ENCODE measurements at regions of chr12 and their contacts with region 1.

Region 1: GRCh38 chr12:121550974-121551634 is 29.7 kb downstream of the KDM2B start:
- DNase-seq: no peak
- H3K4me3 ChIP-seq: no peak overlapping the region
- H3K27ac ChIP-seq: no peak overlapping the region
- H3K4me1 ChIP-seq: no peaks in the 10 kb centered on the region
- H3K27me3 ChIP-seq: no peaks in the 10 kb centered on the region
- CTCF ChIP-seq: no peak
- EP300 ChIP-seq: no peak
- RAD21 ChIP-seq: no peak

Region 2: DNA sequence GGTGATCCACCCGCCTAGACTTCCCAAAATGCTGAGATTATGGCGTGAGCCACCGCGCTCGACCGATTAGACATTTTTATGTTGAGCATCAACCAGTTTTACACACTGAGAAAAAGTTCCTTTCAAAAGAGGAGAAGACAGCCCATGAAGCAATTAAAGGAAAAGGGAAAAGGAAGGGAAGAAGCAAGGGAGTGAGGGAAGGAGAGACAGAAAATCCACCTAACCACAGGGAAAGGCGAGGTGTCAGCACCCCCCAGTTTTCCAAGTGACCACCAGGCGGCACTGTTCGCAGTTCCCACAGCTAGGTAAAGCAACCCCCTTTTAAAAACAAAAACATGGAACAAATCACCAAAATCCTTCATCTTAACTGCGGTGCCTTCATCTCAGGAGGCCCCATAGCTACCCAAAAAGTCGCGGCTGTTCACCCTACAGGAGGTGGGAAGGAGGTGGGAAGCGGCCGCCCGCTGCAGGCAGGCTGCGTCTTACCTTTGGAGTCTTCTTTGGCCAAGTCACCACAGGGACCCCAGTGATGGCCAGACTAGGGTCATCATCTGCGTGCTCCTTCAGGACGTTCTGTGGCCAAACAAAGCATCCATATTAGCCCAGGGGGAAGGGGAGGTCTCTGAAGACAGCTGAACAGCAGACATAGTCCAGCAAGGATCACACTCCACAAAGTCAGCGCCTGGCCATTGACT is 56.9 kb before region 1 on chr12:
- CTCF ChIA-PET with region 1: interaction called, 21 read pairs
- POLR2A ChIA-PET with region 1: interaction called, 3 read pairs
- DNase-seq: peak; percentile 73
- H3K4me3 ChIP-seq: no peak overlapping the region
- H3K27ac ChIP-seq: no peak overlapping the region
- H3K4me1 ChIP-seq: no peaks in the 10 kb centered on the region
- H3K27me3 ChIP-seq: no peaks in the 10 kb centered on the region
- CTCF ChIP-seq: peak; percentile 86
- EP300 ChIP-seq: no peak
- RAD21 ChIP-seq: peak; percentile 51

Region 3: GRCh38 chr12:121536899-121537813 is 13.9 kb before region 1 on chr12:
- CTCF ChIA-PET with region 1: interaction called, 18 read pairs
- POLR2A ChIA-PET with region 1: no interaction called
- DNase-seq: peak; percentile 88
- H3K4me3 ChIP-seq: peak overlapping the region; percentile 50 to 54
- H3K27ac ChIP-seq: peak overlapping the region in 1 of 2 experiments; percentile 35; a peak in 2 of 4 replicates
- H3K4me1 ChIP-seq: peaks cover 4 to 16% of the 10 kb centered on the region in 2 experiments; a peak in 2 of 4 replicates
- H3K27me3 ChIP-seq: no peaks in the 10 kb centered on the region
- CTCF ChIP-seq: no peak
- EP300 ChIP-seq: no peak
- RAD21 ChIP-seq: no peak

Region 4: DNA sequence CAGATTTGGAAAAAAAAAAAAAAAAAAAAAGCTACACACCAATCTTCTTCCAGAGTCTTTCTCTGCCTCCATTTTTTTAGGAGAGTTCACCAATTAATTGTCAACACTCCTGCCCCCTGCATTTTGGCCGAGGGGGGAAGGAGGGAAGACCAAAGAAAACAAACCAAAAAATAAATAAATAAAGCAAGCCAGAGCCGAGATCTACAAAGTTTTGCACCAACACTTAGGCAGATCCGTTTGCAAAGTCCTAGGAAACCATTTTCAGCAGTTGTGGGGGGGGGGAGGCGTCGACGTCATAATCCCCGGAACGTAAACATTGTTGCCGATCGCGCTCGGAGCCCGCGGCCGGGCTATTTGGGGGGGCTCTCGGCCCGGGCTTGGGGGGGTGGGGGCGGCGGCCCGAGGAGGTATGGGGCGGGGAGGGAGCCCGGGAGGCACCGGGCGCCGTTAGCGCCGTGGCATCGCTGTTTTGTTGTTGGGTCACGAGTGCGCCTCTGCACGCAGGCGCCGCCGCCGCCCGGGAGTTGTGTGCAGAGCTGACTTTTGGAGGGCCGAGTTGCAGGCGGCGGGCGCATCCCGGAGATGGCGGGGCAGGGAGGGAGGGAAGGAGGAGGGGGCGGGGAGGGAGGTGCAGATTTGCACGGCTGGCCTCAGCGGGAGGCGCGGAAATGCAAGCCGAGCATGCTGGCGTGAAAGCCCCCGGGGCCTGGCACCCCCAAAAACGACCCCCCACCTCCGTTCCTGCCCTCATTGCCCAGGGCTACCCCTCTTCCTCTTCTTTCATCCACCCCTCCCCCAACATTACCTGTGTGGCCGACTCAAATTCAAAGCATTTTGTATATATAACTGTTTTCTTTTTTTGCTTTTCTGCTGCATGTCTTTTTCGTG is 29.1 kb after region 1 on chr12:
- CTCF ChIA-PET with region 1: interaction called, 30 read pairs
- POLR2A ChIA-PET with region 1: no interaction called
- DNase-seq: peak; percentile 84
- H3K4me3 ChIP-seq: peak overlapping the region; percentile 64 to 87
- H3K27ac ChIP-seq: peak overlapping the region; percentile 90 to 98
- H3K4me1 ChIP-seq: peaks cover 25 to 32% of the 10 kb centered on the region in 2 experiments; a peak in 3 of 4 replicates
- H3K27me3 ChIP-seq: no peaks in the 10 kb centered on the region
- CTCF ChIP-seq: no peak
- EP300 ChIP-seq: no peak
- RAD21 ChIP-seq: no peak

Region 5: GRCh38 chr12:121620328-121620891 is 69.3 kb after region 1 on chr12:
- CTCF ChIA-PET with region 1: interaction called, 86 read pairs
- POLR2A ChIA-PET with region 1: no interaction called
- DNase-seq: no peak
- H3K4me3 ChIP-seq: no peak overlapping the region
- H3K27ac ChIP-seq: no peak overlapping the region
- H3K4me1 ChIP-seq: peaks cover 0 to 3% of the 10 kb centered on the region in 2 experiments; a peak in 1 of 4 replicates
- H3K27me3 ChIP-seq: no peaks in the 10 kb centered on the region
- CTCF ChIP-seq: no peak
- EP300 ChIP-seq: no peak
- RAD21 ChIP-seq: no peak

Region 6: DNA sequence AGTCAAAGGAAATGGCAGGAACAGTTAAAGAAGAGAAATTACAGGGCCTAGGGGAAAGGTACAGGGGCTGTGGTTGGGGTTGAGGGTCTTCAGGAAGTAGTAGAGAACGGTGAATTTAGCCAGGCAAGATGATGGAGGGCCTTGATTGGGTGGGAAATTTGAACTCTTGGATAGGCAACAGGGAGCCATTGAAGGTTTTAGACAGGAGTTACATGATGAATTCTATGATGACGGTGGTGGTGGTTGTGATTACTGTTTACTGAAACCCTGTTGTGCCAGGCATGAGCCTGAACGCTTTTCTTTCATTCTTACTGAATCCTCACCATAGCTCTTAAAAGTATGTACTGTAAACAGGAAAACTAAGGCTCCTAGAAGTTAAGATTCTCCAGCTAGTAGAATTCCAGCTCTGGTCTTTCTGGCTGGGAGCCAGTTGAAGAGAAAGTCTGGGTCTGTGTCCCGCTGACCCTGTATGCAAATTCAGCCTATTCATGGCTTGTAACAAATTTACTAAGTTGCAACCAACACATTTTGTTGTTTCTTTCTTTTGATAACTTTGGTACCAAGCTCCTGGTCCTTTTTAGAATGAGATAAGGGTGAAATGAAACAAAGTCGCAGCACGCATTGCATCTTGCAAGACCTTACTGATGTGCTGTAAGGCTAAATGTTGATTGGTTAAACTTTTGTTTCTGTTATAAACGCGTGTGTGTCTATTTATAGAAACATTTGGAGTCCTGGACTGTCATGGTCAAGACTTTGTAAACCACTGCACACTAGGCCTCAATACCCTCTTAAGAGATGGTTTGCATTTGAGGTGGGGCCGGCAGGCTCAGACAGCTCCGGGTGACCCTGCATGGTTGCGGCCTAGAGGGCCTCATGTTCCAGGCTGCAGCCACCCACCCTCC is 81.2 kb after region 1 on chr12:
- CTCF ChIA-PET with region 1: interaction called, 86 read pairs
- POLR2A ChIA-PET with region 1: no interaction called
- DNase-seq: no peak
- H3K4me3 ChIP-seq: no peak overlapping the region
- H3K27ac ChIP-seq: no peak overlapping the region; a peak in 1 of 4 replicates
- H3K4me1 ChIP-seq: peaks cover 23 to 24% of the 10 kb centered on the region in 2 experiments; a peak in 3 of 4 replicates
- H3K27me3 ChIP-seq: no peaks in the 10 kb centered on the region
- CTCF ChIP-seq: no peak
- EP300 ChIP-seq: no peak
- RAD21 ChIP-seq: no peak

Region 7: GRCh38 chr12:121678716-121679580 is 127.8 kb after region 1 on chr12:
- CTCF ChIA-PET with region 1: interaction called, 50 read pairs
- POLR2A ChIA-PET with region 1: interaction called, 9 read pairs
- DNase-seq: no peak
- H3K4me3 ChIP-seq: no peak overlapping the region
- H3K27ac ChIP-seq: no peak overlapping the region
- H3K4me1 ChIP-seq: peaks cover 0 to 5% of the 10 kb centered on the region in 2 experiments; a peak in 1 of 4 replicates
- H3K27me3 ChIP-seq: no peaks in the 10 kb centered on the region
- CTCF ChIP-seq: no peak
- EP300 ChIP-seq: no peak
- RAD21 ChIP-seq: no peak

Region 8: DNA sequence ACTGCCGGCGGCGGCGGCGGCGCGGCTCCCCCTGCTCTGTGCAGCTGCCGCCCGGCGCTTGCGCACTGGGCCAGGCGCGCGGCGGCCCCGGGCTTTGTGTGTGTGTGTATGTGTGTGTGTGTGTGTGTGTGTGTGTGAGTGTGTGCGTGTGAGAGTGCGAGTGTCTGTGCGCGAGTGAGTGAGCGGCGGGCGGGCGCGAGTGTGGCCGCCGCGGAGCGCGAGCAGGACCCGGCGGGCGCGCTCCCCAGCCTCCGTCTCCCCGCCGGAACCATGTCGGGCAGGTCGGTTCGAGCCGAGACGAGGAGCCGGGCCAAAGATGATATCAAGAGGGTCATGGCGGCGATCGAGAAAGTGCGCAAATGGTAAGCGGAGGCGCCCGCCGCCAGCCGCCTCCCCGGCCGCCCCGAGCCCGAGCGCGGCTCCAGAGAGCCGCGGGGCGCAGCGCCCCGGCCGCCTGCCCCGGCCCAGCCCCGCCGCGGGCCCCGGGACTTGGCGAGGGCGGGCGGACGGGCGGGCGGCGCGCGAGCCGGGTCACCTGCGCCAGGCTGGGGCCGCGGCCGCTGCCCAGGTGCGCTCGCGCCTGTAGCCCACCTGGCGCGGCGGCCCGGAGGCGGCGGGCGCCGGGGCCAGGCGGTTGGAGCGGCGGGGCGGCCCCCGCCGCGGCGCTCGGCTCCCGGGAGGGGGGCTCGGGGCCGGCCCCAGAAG is 470.9 kb after region 1 on chr12 and contains the start of gene BCL7A:
- CTCF ChIA-PET with region 1: no interaction called
- POLR2A ChIA-PET with region 1: no interaction called
- DNase-seq: peak; percentile 92
- H3K4me3 ChIP-seq: peak within 1 kb of the TSS; percentile 66 to 86
- H3K27ac ChIP-seq: peak within 1 kb of the TSS; percentile 74 to 93
- H3K4me1 ChIP-seq: peaks cover 10 to 20% of the 10 kb centered on the region in 2 experiments; a peak in 2 of 4 replicates
- H3K27me3 ChIP-seq: no peaks in the 10 kb centered on the region
- CTCF ChIP-seq: no peak
- EP300 ChIP-seq: no peak
- RAD21 ChIP-seq: no peak
- polyA plus RNA-seq, gene BCL7A: 30.8 and 34.0 TPM in 2 replicates

Region 9: GRCh38 chr12:122917504-122918121 is 1366.5 kb after region 1 on chr12:
- CTCF ChIA-PET with region 1: no interaction called
- POLR2A ChIA-PET with region 1: no interaction called
- DNase-seq: no peak
- H3K4me3 ChIP-seq: no peak overlapping the region
- H3K27ac ChIP-seq: no peak overlapping the region; a peak in 1 of 4 replicates
- H3K4me1 ChIP-seq: peaks cover 4 to 6% of the 10 kb centered on the region in 2 experiments; a peak in 1 of 4 replicates
- H3K27me3 ChIP-seq: no peaks in the 10 kb centered on the region
- CTCF ChIP-seq: no peak
- EP300 ChIP-seq: no peak
- RAD21 ChIP-seq: no peak

Measured in SK-N-SH (cell line).